ENCODE measurements at regions of chr7 and their contacts with region 1.

Region 1: DNA sequence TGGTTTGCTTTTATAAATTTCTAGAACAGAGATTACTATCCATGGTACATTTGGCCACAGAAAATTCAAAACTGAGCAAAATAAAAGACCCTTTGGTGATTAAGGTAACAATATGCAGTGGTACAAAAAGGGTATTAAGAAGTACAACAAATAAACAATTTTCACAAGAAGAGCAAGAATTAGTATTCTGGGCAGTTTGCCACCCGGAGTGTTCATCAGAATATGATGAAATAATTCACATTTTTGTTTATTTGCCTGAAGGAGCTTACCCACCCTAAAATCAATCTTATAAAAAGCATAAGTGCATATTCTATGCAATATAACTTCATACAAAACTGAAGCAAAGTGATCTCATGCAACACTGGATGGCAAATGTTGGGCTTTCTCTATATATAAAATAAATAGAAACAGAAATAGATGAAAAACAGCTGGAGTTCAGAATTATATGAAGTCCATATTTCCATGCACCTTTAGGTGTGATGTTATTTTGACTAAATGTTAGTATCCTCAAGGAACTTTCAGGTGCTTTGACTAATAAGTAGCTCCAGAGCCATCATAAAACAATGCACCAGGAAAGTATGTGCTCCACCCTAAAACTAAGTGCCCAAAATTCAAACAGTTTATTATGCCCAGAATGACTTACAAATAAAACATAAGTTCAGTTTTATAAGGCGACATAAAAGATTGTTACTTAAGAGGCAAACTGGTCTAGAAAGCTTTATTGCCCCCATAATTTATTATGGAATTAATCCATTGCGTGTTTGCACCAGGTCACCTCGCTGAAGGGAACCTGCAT is 474.3 kb downstream of the SEMA3D start:
- DNase-seq: no peak
- H3K4me3 ChIP-seq: no peak overlapping the region
- H3K27ac ChIP-seq: no peak overlapping the region
- H3K4me1 ChIP-seq: no peaks in the 10 kb centered on the region
- H3K27me3 ChIP-seq: no peaks in the 10 kb centered on the region
- CTCF ChIP-seq: no peak
- POLR2A ChIP-seq: no peak

Region 2: GRCh38 chr7:84139986-84140729 is 572.4 kb before region 1 on chr7:
- intact Hi-C with region 1: no loop called
- DNase-seq: no peak
- H3K4me3 ChIP-seq: no peak overlapping the region
- H3K27ac ChIP-seq: no peak overlapping the region
- H3K4me1 ChIP-seq: no peaks in the 10 kb centered on the region
- H3K27me3 ChIP-seq: no peaks in the 10 kb centered on the region
- CTCF ChIP-seq: no peak
- POLR2A ChIP-seq: no peak

Region 3: DNA sequence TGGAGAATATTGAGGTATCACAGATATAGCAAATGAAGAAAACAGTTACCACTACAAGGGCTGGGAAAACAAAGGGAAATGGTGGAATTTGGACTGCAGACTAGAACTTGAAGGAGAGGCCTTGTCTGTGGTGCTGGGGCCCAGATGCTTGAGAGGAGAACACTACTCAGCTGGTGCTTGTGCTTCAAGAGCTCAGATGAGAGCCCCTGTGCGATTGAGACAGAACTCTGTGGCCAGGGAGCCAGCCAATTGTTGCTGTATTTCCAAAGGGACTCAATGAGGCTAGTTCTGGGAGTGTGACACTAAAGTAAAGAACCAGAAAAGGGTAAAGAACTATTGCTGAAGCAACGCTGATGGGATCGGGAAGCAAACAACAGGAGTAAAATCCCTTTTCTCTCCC is 880.8 kb after region 1 on chr7:
- intact Hi-C with region 1: loop called (anchors 5 kb)
- DNase-seq: no peak
- H3K4me3 ChIP-seq: no peak overlapping the region
- H3K27ac ChIP-seq: no peak overlapping the region
- H3K4me1 ChIP-seq: no peaks in the 10 kb centered on the region
- H3K27me3 ChIP-seq: no peaks in the 10 kb centered on the region
- CTCF ChIP-seq: no peak
- POLR2A ChIP-seq: no peak